Cardiac septum (tissue), 1 donor: ENCODE measurements at regions of chr15 and their contacts with region 1.

Region 1: GRCh38 chr15:62928242-62928995 is 114.1 kb upstream of the TPM1 start:
- DNase-seq: no peak

Region 2: GRCh38 chr15:62889734-62890505 is 38.5 kb before region 1 on chr15:
- intact Hi-C with region 1: loop called (anchors 5 kb)
- DNase-seq: no peak